Ascending aorta (tissue), 2 donors: ENCODE measurements at regions of chr13 and their contacts with region 1.

Region 1: GRCh38 chr13:52916486-52916990 is 68.1 kb upstream of the PCDH8 start:
- DNase-seq: no peak
- H3K4me3 ChIP-seq: no peak overlapping the region
- H3K27ac ChIP-seq: peak overlapping the region in 1 of 2 donors; percentile 51
- H3K4me1 ChIP-seq: no peaks in the 10 kb centered on the region
- H3K27me3 ChIP-seq: no peaks in the 10 kb centered on the region
- CTCF ChIP-seq: no peak

Region 2: GRCh38 chr13:52760077-52760476 is 156.5 kb before region 1 on chr13:
- intact Hi-C with region 1: no loop called
- DNase-seq: no peak
- H3K4me3 ChIP-seq: no peak overlapping the region
- H3K27ac ChIP-seq: no peak overlapping the region
- H3K4me1 ChIP-seq: no peaks in the 10 kb centered on the region
- H3K27me3 ChIP-seq: no peaks in the 10 kb centered on the region
- CTCF ChIP-seq: no peak

Region 3: GRCh38 chr13:52850396-52851136 is 66.0 kb before region 1 on chr13:
- intact Hi-C with region 1: loop called (anchors 5 kb)
- DNase-seq: peak in 1 of 2 donors; percentile 73
- H3K4me3 ChIP-seq: peak overlapping the region; percentile 59 to 67
- H3K27ac ChIP-seq: peak overlapping the region; percentile 35 to 60
- H3K4me1 ChIP-seq: peaks cover 0 to 9% of the 10 kb centered on the region in 2 donors
- H3K27me3 ChIP-seq: peaks cover 27% of the 10 kb centered on the region
- CTCF ChIP-seq: no peak

Region 4: DNA sequence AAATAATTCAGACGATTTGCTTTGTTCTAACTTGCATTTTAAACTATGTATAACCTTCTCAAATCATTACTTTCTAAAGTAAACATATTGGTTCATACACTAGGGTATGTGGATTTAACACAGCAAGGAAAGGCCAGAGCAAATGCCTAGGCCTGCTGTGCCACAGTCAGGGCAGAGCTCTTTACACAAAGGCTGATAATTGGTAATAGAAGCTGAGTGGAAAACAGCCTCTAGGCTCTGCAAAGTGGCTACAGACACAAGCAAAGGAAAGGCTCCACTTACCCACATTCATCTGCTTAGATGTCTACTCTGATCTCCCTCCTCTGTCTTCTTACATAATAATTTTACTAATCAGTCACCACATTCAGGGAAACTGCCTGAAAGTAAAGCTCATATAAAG is 494.9 kb after region 1 on chr13:
- intact Hi-C with region 1: no loop called
- DNase-seq: no peak
- H3K4me3 ChIP-seq: no peak overlapping the region
- H3K27ac ChIP-seq: no peak overlapping the region
- H3K4me1 ChIP-seq: no peaks in the 10 kb centered on the region
- H3K27me3 ChIP-seq: no peaks in the 10 kb centered on the region
- CTCF ChIP-seq: no peak